Prostate gland (tissue), 2 donors: ENCODE measurements at regions of chr5 and their contacts with region 1.

Region 1: DNA sequence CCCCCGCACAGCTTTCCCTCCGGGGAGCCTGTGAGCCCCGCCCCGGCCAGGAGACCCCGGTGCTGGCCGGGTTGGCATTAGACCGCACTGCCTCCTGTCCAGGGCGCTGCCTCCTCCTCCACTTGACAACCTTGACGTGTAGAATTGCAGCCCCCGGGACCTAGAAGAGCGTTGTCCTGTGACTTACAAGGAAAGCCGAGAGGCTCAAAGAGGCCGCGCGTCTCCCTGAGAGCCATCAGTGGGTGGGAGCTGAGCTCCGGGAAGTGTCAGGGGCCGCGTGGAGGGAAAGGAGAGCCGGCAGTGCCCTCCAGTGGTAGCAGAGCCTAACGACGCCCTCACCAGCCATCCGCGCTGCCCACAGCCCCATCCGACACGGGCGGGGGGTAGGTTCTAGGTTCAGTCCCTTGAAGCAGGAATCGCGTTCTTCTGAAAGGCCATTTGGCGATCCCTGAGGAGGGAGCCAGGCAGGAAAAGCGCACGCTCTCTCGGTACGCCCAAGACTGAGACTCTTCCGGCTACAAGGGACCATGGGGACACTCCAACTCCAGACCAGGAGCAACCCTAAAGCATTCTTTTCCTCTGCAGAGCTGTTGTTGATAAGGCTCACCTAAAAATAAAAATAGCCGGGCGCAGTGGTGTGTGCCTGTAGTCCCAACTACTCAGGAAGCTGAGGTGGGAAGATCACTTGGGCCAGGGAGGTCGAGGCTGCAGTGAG is 40.6 kb upstream of the SAP30L start:
- DNase-seq: peak; percentile 64
- H3K4me3 ChIP-seq: peak overlapping the region; percentile 5 to 20
- H3K27ac ChIP-seq: no peak overlapping the region
- H3K4me1 ChIP-seq: no peaks in the 10 kb centered on the region
- H3K27me3 ChIP-seq: no peaks in the 10 kb centered on the region
- CTCF ChIP-seq: peak; percentile 44 to 93 (median 76)
- POLR2A ChIP-seq: no peak

Region 2: DNA sequence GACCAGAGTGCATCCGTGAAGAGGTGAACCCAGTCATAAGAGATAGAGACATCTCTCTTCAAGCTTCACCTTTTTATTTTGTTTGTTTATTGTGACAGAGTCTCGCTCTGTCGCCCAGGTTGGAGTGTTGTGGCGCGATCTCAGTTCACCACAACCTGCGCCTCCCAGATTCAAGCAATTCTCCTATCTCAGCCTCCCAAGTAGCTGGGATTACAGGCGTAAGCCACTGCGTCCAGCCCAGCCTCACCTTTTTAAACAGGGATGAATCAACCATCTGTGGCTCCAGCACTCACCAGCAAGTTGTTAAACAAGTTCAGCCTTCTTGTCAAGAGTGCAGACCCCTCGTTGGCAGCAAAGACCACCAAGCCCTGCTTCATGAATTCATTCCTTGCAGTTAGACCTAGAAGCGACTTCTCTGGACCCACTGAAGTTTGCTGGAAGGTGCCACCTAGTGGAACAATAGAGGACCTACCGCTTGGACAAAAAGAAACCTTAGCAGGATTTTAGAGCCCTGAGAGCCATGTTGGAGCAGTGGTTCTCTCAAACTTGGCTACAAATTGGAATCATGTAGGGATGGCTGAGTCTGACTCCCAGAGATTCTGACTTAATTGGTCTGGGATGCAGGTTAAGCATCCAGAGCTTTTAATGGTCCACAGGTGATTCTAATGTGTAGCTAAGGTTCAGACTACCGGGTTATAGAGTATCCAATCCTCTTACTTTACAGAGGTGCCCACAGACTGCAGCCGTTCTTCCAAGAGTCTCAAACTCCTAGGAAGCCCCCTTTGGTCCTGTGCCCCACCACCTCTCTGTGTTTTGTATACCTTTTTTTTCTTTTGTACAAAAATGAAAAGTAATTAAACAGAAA is 225.2 kb before region 1 on chr5:
- intact Hi-C with region 1: loop called (anchors 2 kb)
- DNase-seq: peak; percentile 48
- H3K4me3 ChIP-seq: no peak overlapping the region
- H3K27ac ChIP-seq: no peak overlapping the region
- H3K4me1 ChIP-seq: no peaks in the 10 kb centered on the region
- H3K27me3 ChIP-seq: no peaks in the 10 kb centered on the region
- CTCF ChIP-seq: peak; percentile 54 to 71 (median 62)
- POLR2A ChIP-seq: no peak